Ovary (tissue), 10 donors: ENCODE measurements at regions of chr2 and their contacts with region 1.

Region 1: DNA sequence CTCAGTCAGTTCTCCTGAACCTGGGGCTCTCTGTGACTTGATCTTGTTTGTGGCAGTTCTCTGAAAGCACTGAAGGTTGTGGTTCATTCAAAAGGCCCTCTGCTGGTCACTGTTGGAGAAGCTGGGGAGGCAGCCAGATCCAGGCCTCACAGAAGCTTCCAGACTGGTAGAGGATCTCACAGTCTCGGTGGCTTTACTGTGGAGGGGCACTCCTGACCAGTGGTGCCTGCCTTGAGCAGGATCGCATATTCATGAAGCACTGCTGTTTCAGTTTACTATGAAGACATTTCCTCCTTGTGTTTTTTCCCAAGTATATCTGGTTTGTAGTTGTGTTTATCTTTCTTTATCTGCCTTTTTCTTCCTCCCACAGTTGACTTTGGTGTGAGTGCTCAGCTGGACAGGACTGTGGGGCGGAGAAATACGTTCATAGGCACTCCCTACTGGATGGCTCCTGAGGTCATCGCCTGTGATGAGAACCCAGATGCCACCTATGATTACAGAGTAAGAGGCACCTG is 133.9 kb downstream of the MAP4K4 start:
- DNase-seq: peak; percentile 63 to 81 (median 69)
- H3K4me3 ChIP-seq: no peak overlapping the region
- H3K27ac ChIP-seq: peak overlapping the region in 1 of 2 donors; percentile 34
- H3K4me1 ChIP-seq: peaks cover 14% of the 10 kb centered on the region
- H3K27me3 ChIP-seq: no peaks in the 10 kb centered on the region
- CTCF ChIP-seq: peak; percentile 43 to 76 (median 61)
- EP300 ChIP-seq: no peak
- POLR2A ChIP-seq: no peak

Region 2: DNA sequence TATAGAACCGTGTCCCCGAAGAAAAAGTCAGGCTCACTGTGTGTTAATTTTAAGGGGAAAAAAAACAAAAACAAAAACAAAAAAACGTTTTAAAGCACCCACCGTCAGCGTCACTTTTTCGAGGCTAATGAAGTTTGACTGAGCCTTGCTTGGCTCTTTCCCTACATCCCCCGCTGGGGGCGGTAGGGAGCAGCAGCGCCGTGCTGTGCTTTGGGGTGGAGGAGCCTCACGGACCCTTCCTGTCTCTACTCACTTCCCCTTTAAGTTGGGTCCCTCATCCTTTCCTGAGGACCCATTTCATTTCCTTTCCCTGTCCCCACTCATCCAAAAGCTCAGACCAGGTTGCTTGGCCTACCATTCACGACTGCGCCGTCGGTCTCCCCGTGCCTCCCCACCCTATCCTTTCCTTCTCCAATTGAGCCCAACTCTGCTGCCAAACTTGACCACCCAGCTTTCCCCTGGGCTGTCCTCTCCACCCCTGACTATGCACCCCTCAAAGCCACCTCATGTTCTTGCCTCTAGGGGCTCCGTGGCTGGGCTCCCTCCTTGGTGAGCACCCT is 912.0 kb before region 1 on chr2:
- intact Hi-C with region 1: no loop called
- DNase-seq: no peak
- H3K4me3 ChIP-seq: no peak overlapping the region
- H3K27ac ChIP-seq: no peak overlapping the region
- H3K4me1 ChIP-seq: no peaks in the 10 kb centered on the region
- H3K27me3 ChIP-seq: no peaks in the 10 kb centered on the region
- CTCF ChIP-seq: no peak
- EP300 ChIP-seq: no peak
- POLR2A ChIP-seq: no peak

Region 3: GRCh38 chr2:101697124-101698013 is 134.0 kb before region 1 on chr2 and contains the start of gene MAP4K4:
- intact Hi-C with region 1: loop called in 2 of 4 experiments (anchors 10 kb)
- DNase-seq: peak; percentile 83 to 88 (median 86)
- H3K4me3 ChIP-seq: peak within 1 kb of the TSS; percentile 78
- H3K27ac ChIP-seq: peak within 1 kb of the TSS; percentile 65 to 94
- H3K4me1 ChIP-seq: peaks cover 11% of the 10 kb centered on the region
- H3K27me3 ChIP-seq: no peaks in the 10 kb centered on the region
- CTCF ChIP-seq: peak in 2 of 3 donors; percentile 23 to 36
- EP300 ChIP-seq: no peak
- POLR2A ChIP-seq: peak; percentile 46
- total RNA-seq, gene MAP4K4: 38.4 to 60.9 (median 49.7) TPM

Region 4: GRCh38 chr2:101815739-101816391 is 15.5 kb before region 1 on chr2:
- intact Hi-C with region 1: no loop called
- DNase-seq: peak in 2 of 5 donors; percentile 39 to 46
- H3K4me3 ChIP-seq: no peak overlapping the region
- H3K27ac ChIP-seq: no peak overlapping the region
- H3K4me1 ChIP-seq: peaks cover 12% of the 10 kb centered on the region
- H3K27me3 ChIP-seq: no peaks in the 10 kb centered on the region
- CTCF ChIP-seq: no peak
- EP300 ChIP-seq: no peak
- POLR2A ChIP-seq: no peak

Region 5: GRCh38 chr2:101931404-101931803 is 100.0 kb after region 1 on chr2:
- intact Hi-C with region 1: no loop called
- DNase-seq: no peak
- H3K4me3 ChIP-seq: no peak overlapping the region
- H3K27ac ChIP-seq: no peak overlapping the region
- H3K4me1 ChIP-seq: no peaks in the 10 kb centered on the region
- H3K27me3 ChIP-seq: no peaks in the 10 kb centered on the region
- CTCF ChIP-seq: no peak
- EP300 ChIP-seq: no peak
- POLR2A ChIP-seq: no peak

Region 6: GRCh38 chr2:101961296-101962191 is 130.1 kb after region 1 on chr2:
- intact Hi-C with region 1: no loop called
- DNase-seq: peak; percentile 85 to 94 (median 89)
- H3K4me3 ChIP-seq: no peak overlapping the region
- H3K27ac ChIP-seq: peak overlapping the region; percentile 79 to 90
- H3K4me1 ChIP-seq: peaks cover 19% of the 10 kb centered on the region
- H3K27me3 ChIP-seq: no peaks in the 10 kb centered on the region
- CTCF ChIP-seq: peak in 2 of 3 donors; percentile 36 to 50
- EP300 ChIP-seq: peak; percentile 93
- POLR2A ChIP-seq: no peak